Activated naive CD4-positive, alpha-beta T cell treated with anti-CD3 and anti-CD28 coated beads for 36 hours (primary cell): ENCODE measurements at regions of chr10 and their contacts with region 1.

Region 1: GRCh38 chr10:30591249-30591670 is 38.3 kb downstream of the LYZL2 start:
- DNase-seq: peak; percentile 55
- H3K4me3 Mint-ChIP-seq: no peak overlapping the region
- H3K27ac Mint-ChIP-seq: no peak overlapping the region
- H3K4me1 Mint-ChIP-seq: no peaks in the 10 kb centered on the region
- H3K27me3 Mint-ChIP-seq: no peaks in the 10 kb centered on the region

Region 2: DNA sequence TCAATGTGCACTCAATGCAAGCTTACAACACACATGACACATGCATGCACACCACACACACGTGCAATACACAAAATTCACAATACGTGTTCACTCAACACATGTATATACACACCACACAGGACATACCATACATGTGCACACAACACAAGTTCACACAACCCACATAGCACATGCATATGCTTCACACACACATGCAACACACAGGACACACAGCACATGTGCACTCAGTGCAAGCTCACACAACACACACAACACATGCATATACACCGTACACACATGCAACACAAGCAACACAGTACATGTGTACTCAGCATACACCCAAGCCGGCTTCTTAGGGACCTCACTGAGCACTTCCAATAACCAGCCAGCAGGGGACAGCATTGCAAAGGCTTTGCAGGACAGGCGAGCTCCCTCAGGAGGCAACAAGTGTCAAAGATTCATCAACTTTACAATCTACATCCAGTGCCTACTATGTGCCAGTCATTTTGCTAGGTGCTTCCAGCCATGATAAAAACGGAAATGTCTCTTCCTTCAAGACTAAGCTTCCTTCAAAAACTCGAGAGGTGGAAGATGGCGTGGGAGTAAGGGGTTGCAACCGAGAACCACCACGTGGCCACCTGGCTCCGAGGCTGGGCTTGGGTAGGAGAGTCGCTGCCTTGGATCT is 593.0 kb before region 1 on chr10:
- CTCF ChIA-PET with region 1: interaction called, 15 read pairs
- intact Hi-C with region 1: loop called (anchors 1 kb)
- DNase-seq: peak; percentile 86
- H3K4me3 Mint-ChIP-seq: no peak overlapping the region
- H3K27ac Mint-ChIP-seq: no peak overlapping the region
- H3K4me1 Mint-ChIP-seq: peaks cover 6% of the 10 kb centered on the region
- H3K27me3 Mint-ChIP-seq: peaks cover 43% of the 10 kb centered on the region

Region 3: GRCh38 chr10:30392564-30392990 is 198.7 kb before region 1 on chr10:
- CTCF ChIA-PET with region 1: interaction called, 84 read pairs
- intact Hi-C with region 1: loop called (anchors 1 kb)
- DNase-seq: peak; percentile 82
- H3K4me3 Mint-ChIP-seq: no peak overlapping the region
- H3K27ac Mint-ChIP-seq: no peak overlapping the region
- H3K4me1 Mint-ChIP-seq: peaks cover 3% of the 10 kb centered on the region
- H3K27me3 Mint-ChIP-seq: peaks cover 5% of the 10 kb centered on the region

Region 4: DNA sequence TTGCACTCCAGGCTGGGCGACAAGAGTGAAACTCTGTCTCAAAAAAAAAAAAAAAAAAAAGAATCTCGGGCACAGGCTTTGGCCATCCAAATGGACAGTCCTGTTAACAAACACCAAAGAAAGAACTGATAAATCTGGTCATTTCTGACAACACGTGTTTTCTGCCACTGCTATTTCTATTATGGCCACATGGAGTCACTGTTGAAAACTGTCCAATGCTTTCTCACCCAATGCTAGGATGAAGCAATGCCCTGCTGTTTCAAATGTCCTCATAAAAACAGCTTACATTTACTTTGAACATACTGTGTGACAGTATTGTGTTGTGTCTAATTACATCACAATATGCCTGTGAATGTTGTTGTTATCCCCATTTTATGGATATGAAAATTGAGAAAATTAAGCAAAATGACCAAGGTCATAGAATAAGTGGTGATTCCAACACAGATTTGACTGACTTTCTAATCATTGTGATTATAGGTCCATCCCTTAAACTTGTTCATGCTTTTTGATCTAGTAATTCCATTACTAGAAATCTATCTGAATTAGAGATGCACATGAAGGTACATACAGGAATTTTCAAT is 177.2 kb before region 1 on chr10:
- CTCF ChIA-PET with region 1: interaction called, 10 read pairs
- intact Hi-C with region 1: loop called (anchors 1 kb)
- DNase-seq: peak; percentile 43
- H3K4me3 Mint-ChIP-seq: no peak overlapping the region
- H3K27ac Mint-ChIP-seq: no peak overlapping the region
- H3K4me1 Mint-ChIP-seq: peaks cover 15% of the 10 kb centered on the region
- H3K27me3 Mint-ChIP-seq: no peaks in the 10 kb centered on the region

Region 5: GRCh38 chr10:30562787-30563186 is 28.5 kb before region 1 on chr10:
- CTCF ChIA-PET with region 1: interaction called, 15 read pairs
- intact Hi-C with region 1: no loop called
- DNase-seq: peak; percentile 48
- H3K4me3 Mint-ChIP-seq: no peak overlapping the region
- H3K27ac Mint-ChIP-seq: no peak overlapping the region
- H3K4me1 Mint-ChIP-seq: no peaks in the 10 kb centered on the region
- H3K27me3 Mint-ChIP-seq: peaks cover 5% of the 10 kb centered on the region